Activated B cell treated with CpG ODN at 0.5 μM for 24 hours (primary cell): ENCODE measurements at regions of chr21 and their contacts with region 1.

Region 1: DNA sequence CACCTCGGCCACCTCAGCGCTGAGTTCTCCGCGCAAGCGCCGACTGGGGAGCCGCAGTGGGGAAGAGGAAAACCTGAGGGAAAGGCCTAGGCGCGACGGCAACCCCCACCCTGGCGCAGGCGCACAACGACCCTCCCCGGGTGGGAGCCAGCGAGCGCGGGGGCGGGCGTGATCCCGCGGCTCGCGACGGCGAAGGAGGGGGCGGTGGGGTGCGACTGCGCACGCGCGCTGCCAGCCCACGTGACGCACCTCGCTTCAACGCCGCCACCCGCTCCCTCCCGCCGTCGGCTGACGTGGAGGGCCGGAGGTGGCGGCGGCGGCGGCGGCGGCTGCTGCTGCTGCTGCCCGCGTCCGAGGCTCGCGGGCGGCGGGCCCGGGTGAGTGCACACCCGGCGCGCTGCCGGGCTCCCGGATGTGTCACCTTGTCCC is at the starts of genes PIGP and TTC3:
- DNase-seq: peak; percentile 99
- ATAC-seq: peak; percentile 63
- H3K4me3 Mint-ChIP-seq: peak within 1 kb of the TSS; percentile 87
- H3K27ac Mint-ChIP-seq: peak within 1 kb of the TSS; percentile 93
- H3K4me1 Mint-ChIP-seq: peaks cover 44% of the 10 kb centered on the region
- H3K27me3 Mint-ChIP-seq: no peaks in the 10 kb centered on the region
- CTCF ChIP-seq: no peak
- total RNA-seq, gene PIGP: 17.3 and 17.7 TPM in 2 replicates
- total RNA-seq, gene TTC3: 61.1 and 69.8 TPM in 2 replicates

Region 2: DNA sequence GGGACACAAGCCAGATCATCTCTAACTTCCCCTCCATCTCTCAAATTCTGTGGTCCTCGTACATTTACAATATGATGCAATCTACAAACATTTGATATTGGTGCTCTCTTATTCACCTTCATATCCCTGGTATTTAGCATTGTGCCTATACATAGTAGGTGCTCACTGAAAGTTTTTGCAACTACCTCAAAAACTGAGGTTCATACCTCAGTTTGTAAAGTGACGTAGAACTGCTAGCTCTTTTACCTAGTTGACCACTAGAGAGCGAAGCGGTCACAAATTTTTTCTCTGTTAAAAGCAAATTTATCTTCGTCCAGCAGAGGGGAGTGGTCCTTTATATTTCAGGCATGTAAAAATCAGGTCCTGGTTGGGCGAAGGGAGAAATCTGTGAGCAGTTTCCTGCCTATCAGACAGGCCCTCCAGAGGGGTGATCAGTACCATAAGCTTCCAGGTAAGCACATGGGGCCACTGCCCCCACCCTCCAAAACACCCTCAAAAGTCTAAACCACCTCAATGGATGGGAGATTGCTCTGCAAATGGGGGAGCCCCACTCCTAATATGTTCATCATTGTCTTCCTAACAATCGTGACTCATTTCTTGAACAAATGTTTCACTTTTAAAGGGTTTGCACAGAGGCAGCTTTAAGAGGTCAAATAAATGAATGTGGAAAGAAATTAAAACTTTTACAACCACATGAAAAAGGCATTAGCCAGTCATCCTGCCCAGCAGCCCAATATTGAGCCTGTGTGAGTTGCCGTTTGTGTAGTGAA is 95.9 kb before region 1 on chr21:
- CTCF ChIA-PET with region 1: interaction called, 3 read pairs
- POLR2A ChIA-PET with region 1: no interaction called
- intact Hi-C with region 1: loop called (anchors 2 kb)
- DNase-seq: peak; percentile 30
- ATAC-seq: peak; percentile 84
- H3K4me3 Mint-ChIP-seq: peak overlapping the region; percentile 48
- H3K27ac Mint-ChIP-seq: peak overlapping the region; percentile 57
- H3K4me1 Mint-ChIP-seq: peaks cover 24% of the 10 kb centered on the region
- H3K27me3 Mint-ChIP-seq: peaks cover 4% of the 10 kb centered on the region
- CTCF ChIP-seq: no peak

Region 3: GRCh38 chr21:37009740-37010341 is 63.2 kb before region 1 on chr21:
- CTCF ChIA-PET with region 1: no interaction called
- POLR2A ChIA-PET with region 1: no interaction called
- intact Hi-C with region 1: loop called (anchors 5 kb)
- DNase-seq: peak; percentile 62
- ATAC-seq: peak; percentile 85
- H3K4me3 Mint-ChIP-seq: peak overlapping the region; percentile 39
- H3K27ac Mint-ChIP-seq: no peak overlapping the region
- H3K4me1 Mint-ChIP-seq: peaks cover 19% of the 10 kb centered on the region
- H3K27me3 Mint-ChIP-seq: peaks cover 46% of the 10 kb centered on the region
- CTCF ChIP-seq: no peak

Region 4: GRCh38 chr21:37220981-37221664 is 148.1 kb after region 1 on chr21:
- CTCF ChIA-PET with region 1: no interaction called
- POLR2A ChIA-PET with region 1: no interaction called
- intact Hi-C with region 1: loop called (anchors 2 kb)
- DNase-seq: peak; percentile 90
- ATAC-seq: peak; percentile 87
- H3K4me3 Mint-ChIP-seq: peak overlapping the region; percentile 91
- H3K27ac Mint-ChIP-seq: peak overlapping the region; percentile 88
- H3K4me1 Mint-ChIP-seq: peaks cover 31% of the 10 kb centered on the region
- H3K27me3 Mint-ChIP-seq: no peaks in the 10 kb centered on the region
- CTCF ChIP-seq: no peak